PC-3 (cell line): ENCODE measurements at regions of chr9 and their contacts with region 1.

Region 1: GRCh38 chr9:76987594-76988200 is 31.8 kb upstream of the FOXB2 start:
- DNase-seq: peak; percentile 69
- ATAC-seq: peak; percentile 54
- H3K4me3 ChIP-seq: no peak overlapping the region
- H3K27ac ChIP-seq: no peak overlapping the region
- H3K4me1 ChIP-seq: no peaks in the 10 kb centered on the region
- H3K27me3 ChIP-seq: peaks cover 33% of the 10 kb centered on the region
- CTCF ChIP-seq: peak; percentile 75

Region 2: GRCh38 chr9:76761448-76761847 is 226.2 kb before region 1 on chr9:
- CTCF ChIA-PET with region 1: no interaction called
- POLR2A ChIA-PET with region 1: no interaction called
- intact Hi-C with region 1: loop called (anchors 2 kb)
- DNase-seq: peak; percentile 19
- ATAC-seq: no peak
- H3K4me3 ChIP-seq: no peak overlapping the region
- H3K27ac ChIP-seq: no peak overlapping the region
- H3K4me1 ChIP-seq: no peaks in the 10 kb centered on the region
- H3K27me3 ChIP-seq: peaks cover 7% of the 10 kb centered on the region; the same call in 1 of the 2 replicates
- CTCF ChIP-seq: peak; percentile 58

Region 3: DNA sequence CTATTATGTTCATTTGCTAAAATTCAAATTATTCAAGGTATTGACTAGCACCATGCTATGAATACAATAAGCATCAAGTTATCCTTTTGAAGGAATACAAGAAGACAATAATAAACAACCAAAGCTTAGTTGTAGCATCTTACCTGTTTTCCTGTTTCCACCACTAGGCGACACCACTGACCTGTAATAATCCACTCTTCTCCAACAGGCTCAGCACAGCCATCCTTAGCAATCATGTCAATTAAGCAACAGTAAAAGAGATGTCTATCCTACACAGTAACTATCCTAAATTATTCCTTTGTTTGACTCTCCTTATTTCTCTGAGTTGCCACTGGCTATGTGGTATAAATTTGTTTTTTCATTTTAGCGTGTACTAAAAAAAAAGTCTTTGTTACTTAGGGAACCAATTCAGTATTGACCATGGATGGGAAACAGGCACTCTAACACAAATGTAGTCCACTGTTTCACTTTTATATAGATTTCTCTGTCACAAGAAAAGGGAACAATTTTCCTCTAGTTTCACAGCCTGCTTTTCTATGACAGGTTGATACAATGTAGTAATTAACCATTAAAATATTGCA is 177.2 kb before region 1 on chr9:
- CTCF ChIA-PET with region 1: no interaction called
- POLR2A ChIA-PET with region 1: no interaction called
- intact Hi-C with region 1: loop called (anchors 1 kb)
- DNase-seq: peak; percentile 68
- ATAC-seq: peak; percentile 70
- H3K4me3 ChIP-seq: no peak overlapping the region
- H3K27ac ChIP-seq: no peak overlapping the region
- H3K4me1 ChIP-seq: no peaks in the 10 kb centered on the region
- H3K27me3 ChIP-seq: peaks cover 6% of the 10 kb centered on the region; the same call in 1 of the 2 replicates
- CTCF ChIP-seq: peak; percentile 85

Region 4: DNA sequence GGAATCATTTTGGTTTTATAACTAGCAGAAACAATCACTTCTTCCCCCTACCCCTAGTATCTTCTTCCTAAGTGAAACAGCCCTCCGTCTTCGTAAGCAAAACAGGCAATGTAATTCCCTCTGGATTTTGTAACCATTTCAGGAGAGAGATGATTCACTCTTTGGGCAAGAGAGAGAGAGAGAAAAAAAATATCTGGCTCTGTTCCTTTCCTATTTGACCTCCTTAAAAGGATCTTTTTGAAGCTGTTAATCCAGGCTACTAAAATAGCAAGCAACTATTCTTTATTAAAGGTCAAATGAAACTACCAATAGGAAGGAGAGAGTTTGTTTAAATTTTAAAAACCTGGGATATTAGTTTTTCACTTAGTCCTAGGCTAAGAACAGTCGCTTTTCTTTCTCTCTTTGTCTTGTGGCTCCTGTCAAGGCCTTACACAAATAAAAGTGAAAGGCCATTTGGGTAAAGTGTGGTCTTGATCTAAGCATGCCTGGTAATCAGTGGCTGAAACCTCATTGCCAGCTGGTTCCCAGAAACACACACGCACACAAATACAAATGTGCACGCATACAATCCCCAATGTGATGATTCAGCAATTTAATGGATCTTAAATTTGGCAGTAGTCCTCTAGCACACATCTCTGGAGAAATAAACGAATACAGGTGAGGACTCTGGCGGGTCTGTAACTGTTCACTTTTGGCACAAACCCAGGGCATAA is 152.0 kb before region 1 on chr9:
- CTCF ChIA-PET with region 1: no interaction called
- POLR2A ChIA-PET with region 1: no interaction called
- intact Hi-C with region 1: no loop called
- DNase-seq: peak; percentile 38
- ATAC-seq: no peak
- H3K4me3 ChIP-seq: no peak overlapping the region
- H3K27ac ChIP-seq: peak overlapping the region; percentile 28; the same call in 1 of the 2 replicates
- H3K4me1 ChIP-seq: peaks cover 13% of the 10 kb centered on the region; the same call in 1 of the 2 replicates
- H3K27me3 ChIP-seq: no peaks in the 10 kb centered on the region
- CTCF ChIP-seq: no peak

Region 5: GRCh38 chr9:76894198-76894597 is 93.5 kb before region 1 on chr9:
- CTCF ChIA-PET with region 1: no interaction called
- POLR2A ChIA-PET with region 1: no interaction called
- intact Hi-C with region 1: loop called (anchors 1 kb)
- DNase-seq: no peak
- ATAC-seq: no peak
- H3K4me3 ChIP-seq: no peak overlapping the region
- H3K27ac ChIP-seq: no peak overlapping the region
- H3K4me1 ChIP-seq: no peaks in the 10 kb centered on the region
- H3K27me3 ChIP-seq: peaks cover 25% of the 10 kb centered on the region; the same call in 1 of the 2 replicates
- CTCF ChIP-seq: no peak